ENCODE measurements at regions of chr7 and their contacts with region 1.

Region 1: DNA sequence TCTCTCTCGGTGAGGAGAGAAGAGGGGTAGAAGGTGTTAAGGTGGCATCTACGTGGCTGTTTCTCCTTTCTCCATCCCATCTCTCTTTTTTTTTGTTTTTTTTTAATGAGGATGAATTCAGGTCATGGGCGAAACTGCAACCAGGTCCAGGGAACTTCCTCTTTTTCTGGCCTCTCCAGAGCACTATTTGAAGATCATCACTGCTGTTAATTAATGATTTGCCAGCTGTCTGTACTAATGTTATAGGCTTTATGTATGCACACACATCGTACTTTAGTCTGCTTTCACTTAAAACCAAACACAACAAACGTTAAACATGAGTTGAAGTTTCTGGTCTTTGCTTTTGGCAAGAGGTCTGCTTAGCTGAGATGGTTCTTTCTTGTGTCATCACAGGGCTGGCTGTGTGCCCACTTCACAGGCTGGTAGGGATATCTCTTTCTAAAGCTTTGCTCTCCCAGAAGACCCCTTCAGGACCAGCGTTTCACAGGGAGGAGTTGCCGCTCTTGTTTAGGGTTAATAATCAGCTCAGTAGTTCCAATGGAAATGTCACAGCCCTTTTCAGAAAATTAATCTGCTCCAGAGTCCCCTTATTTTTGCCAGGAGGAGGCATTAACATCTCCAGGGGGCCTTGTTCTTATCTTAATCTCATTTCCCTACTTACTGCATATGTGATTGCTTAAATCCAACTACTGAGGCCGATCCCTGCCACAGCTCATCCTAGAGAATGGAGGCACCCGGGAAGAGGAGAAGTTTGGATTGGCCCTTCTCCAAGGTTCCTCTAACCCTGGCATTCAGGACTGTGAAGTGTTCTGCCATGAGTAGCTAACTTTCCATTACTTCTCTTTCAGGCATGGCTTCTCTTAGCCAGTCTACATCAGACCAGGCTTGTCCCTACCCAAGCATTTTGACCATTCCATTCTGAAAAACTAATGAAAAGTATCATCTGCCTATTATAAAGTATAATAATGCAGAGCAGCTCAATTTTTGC is 273.9 kb upstream of the NFE2L3 start:
- DNase-seq: no peak
- ATAC-seq: no peak
- H3K4me3 ChIP-seq: no peak overlapping the region
- H3K27ac ChIP-seq: no peak overlapping the region
- H3K4me1 ChIP-seq: peaks cover 13% of the 10 kb centered on the region
- H3K27me3 ChIP-seq: peaks cover 0 to 4% (median 0%) of the 10 kb centered on the region in 3 donors
- CTCF ChIP-seq: no peak

Region 2: GRCh38 chr7:26013551-26014083 is 135.5 kb after region 1 on chr7:
- intact Hi-C with region 1: no loop called
- DNase-seq: no peak
- ATAC-seq: no peak
- H3K4me3 ChIP-seq: no peak overlapping the region
- H3K27ac ChIP-seq: no peak overlapping the region
- H3K4me1 ChIP-seq: no peaks in the 10 kb centered on the region
- H3K27me3 ChIP-seq: peaks cover 0 to 6% (median 0%) of the 10 kb centered on the region in 3 donors
- CTCF ChIP-seq: no peak

Region 3: GRCh38 chr7:26675143-26675887 is 797.2 kb after region 1 on chr7:
- intact Hi-C with region 1: loop called in 1 of 2 experiments (anchors 10 kb)
- DNase-seq: no peak
- ATAC-seq: no peak
- H3K4me3 ChIP-seq: no peak overlapping the region
- H3K27ac ChIP-seq: no peak overlapping the region
- H3K4me1 ChIP-seq: no peaks in the 10 kb centered on the region
- H3K27me3 ChIP-seq: peaks cover 0 to 2% (median 0%) of the 10 kb centered on the region in 3 donors
- CTCF ChIP-seq: no peak

Region 4: GRCh38 chr7:26843705-26844104 is 965.6 kb after region 1 on chr7:
- intact Hi-C with region 1: loop called in 1 of 2 experiments (anchors 10 kb)
- DNase-seq: no peak
- ATAC-seq: no peak
- H3K4me3 ChIP-seq: no peak overlapping the region
- H3K27ac ChIP-seq: no peak overlapping the region
- H3K4me1 ChIP-seq: no peaks in the 10 kb centered on the region
- H3K27me3 ChIP-seq: no peaks in the 10 kb centered on the region
- CTCF ChIP-seq: no peak

Measured in psoas muscle (tissue), 8 donors.